ENCODE measurements at regions of chr19 and their contacts with region 1.

Region 1: GRCh38 chr19:39435499-39436349 is at the start of gene RPS16:
- DNase-seq: peak; percentile 99
- H3K4me3 Mint-ChIP-seq: peak within 1 kb of the TSS; percentile 99
- H3K27ac Mint-ChIP-seq: peak within 1 kb of the TSS; percentile 99
- H3K4me1 Mint-ChIP-seq: peaks cover 54% of the 10 kb centered on the region
- H3K27me3 Mint-ChIP-seq: no peaks in the 10 kb centered on the region
- total RNA-seq, gene RPS16: 4,195 to 4,327 TPM

Region 2: GRCh38 chr19:39277612-39278011 is 158.1 kb before region 1 on chr19:
- CTCF ChIA-PET with region 1: no interaction called
- intact Hi-C with region 1: no loop called
- DNase-seq: no peak
- H3K4me3 Mint-ChIP-seq: no peak overlapping the region
- H3K27ac Mint-ChIP-seq: no peak overlapping the region
- H3K4me1 Mint-ChIP-seq: no peaks in the 10 kb centered on the region
- H3K27me3 Mint-ChIP-seq: peaks cover 10% of the 10 kb centered on the region

Region 3: DNA sequence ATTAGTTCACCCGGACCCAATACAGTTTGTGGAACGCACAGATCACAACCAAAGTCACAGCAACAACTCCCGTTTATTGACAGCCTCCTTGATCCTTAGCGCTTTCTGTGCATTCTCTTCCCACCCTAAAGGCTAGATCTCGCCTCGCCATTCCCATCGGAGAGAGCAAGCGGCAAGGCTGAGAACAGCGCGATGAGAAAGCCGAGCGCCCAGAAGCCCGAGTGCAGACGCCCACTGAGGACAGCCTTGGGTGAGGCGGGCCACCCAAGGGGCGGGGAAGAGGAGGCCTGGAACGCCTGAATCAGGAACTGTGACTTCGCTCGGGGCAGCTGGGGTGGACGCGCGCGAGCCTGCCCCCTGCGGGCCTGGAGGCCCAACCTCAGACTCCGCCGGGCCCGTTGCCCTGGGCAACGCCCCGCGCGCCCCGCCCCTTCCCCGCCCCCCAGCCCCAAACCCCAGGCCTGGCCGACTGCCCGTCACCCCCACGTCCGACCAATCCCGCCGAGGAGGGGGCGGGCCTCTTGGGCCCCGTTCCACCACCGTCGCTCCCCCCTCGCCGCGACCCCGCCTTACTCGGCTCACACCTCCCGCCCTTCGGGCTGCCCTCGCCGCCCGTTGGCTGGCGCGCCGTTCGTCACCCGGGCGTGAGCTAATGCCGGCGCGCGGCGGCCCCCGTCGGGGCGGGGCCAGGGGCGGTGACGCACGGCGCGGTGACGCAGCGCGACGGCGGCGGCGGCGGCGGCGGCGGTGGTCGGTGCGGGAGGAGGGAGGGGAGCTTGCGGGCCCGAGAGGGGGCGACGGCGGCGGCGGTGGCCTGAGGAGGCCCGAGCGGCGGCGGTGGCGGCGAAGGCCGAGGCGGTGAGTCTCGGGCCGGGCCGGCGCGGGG is 93.8 kb before region 1 on chr19 and contains the start of gene SAMD4B:
- CTCF ChIA-PET with region 1: no interaction called
- intact Hi-C with region 1: loop called (anchors 2 kb)
- DNase-seq: peak; percentile 99
- H3K4me3 Mint-ChIP-seq: peak within 1 kb of the TSS; percentile 91
- H3K27ac Mint-ChIP-seq: peak within 1 kb of the TSS; percentile 91
- H3K4me1 Mint-ChIP-seq: peaks cover 65% of the 10 kb centered on the region
- H3K27me3 Mint-ChIP-seq: no peaks in the 10 kb centered on the region
- total RNA-seq, gene SAMD4B: 33.0 to 35.8 TPM

Region 4: DNA sequence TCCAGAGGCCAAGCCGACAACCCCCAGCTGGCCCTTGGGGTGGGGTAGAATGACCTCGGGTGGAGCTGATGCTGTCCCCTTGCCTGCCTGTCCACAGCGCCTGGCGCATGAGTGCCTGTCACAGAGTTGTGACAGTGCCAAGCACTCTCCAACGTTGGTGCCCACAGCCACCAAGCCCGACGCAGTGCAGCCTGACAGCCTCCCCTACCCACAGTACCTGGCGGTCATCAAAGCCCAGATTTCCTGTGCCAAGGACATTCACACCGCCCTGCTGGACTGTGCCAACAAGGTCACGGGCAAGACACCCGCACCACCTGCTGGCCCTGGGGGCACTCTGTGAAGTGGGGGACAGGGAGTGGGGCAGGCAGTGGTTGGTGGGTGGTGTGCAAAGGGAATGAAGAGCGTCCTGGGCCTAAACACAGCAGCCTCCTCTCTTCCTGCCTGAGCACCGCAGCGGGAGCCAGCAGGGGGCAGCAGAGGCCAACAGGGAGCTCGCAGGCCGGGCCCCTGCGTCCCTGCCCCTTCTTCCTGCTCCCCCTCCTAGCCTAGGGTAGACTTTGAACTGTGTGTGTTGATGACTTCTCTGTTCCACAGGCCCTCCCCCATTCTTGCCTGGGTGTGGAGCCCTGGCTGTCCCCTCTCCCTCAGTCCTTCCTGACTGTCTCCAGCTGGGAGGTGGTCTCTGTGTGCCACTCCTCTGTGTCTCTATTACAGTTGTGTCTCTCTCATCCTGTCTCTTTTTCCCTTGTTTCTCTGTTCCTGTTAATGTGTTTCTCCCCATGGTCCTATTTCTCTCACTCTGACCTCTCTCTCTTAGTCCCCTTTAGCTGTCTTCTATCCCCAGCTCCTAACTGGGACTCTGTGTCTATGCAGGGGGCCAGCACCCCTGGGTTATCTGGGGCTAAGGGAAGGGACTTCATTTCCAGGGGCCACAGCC is 38.1 kb before region 1 on chr19:
- CTCF ChIA-PET with region 1: interaction called, 7 read pairs
- intact Hi-C with region 1: loop called (anchors 1 kb)
- DNase-seq: peak; percentile 96
- H3K4me3 Mint-ChIP-seq: peak overlapping the region; percentile 34
- H3K27ac Mint-ChIP-seq: peak overlapping the region; percentile 91
- H3K4me1 Mint-ChIP-seq: peaks cover 63% of the 10 kb centered on the region
- H3K27me3 Mint-ChIP-seq: no peaks in the 10 kb centered on the region